ENCODE measurements at regions of chr4 and their contacts with region 1.

Region 1: GRCh38 chr4:73676861-73677323 is 56.7 kb upstream of the RASSF6 start:
- DNase-seq: peak; percentile 49
- H3K4me3 Mint-ChIP-seq: no peak overlapping the region
- H3K27ac Mint-ChIP-seq: peak overlapping the region; percentile 79
- H3K4me1 Mint-ChIP-seq: peaks cover 46% of the 10 kb centered on the region
- H3K27me3 Mint-ChIP-seq: no peaks in the 10 kb centered on the region
- CTCF ChIP-seq: no peak

Region 2: DNA sequence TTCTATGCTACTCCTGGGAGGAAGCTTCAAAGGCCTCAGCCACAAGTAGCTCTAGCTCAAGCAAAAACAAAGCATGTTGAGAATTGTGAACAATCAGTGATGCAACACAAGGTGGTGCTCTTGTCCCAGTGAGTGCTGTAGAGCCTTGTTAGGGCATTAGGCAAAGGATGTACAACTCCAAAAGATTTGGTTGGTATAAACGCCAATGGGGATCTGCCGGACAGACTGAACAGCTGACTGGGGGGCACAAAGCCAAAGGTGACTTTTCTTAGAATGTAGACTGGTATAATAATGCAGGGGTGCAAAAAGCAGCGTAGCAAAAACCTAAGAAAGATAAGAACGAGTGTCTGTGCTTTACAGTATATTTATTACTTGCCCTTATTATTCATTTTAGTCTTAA is 335.4 kb before region 1 on chr4:
- CTCF ChIA-PET with region 1: no interaction called
- intact Hi-C with region 1: no loop called
- DNase-seq: peak; percentile 35
- H3K4me3 Mint-ChIP-seq: no peak overlapping the region
- H3K27ac Mint-ChIP-seq: no peak overlapping the region
- H3K4me1 Mint-ChIP-seq: peaks cover 14% of the 10 kb centered on the region
- H3K27me3 Mint-ChIP-seq: no peaks in the 10 kb centered on the region
- CTCF ChIP-seq: no peak

Region 3: DNA sequence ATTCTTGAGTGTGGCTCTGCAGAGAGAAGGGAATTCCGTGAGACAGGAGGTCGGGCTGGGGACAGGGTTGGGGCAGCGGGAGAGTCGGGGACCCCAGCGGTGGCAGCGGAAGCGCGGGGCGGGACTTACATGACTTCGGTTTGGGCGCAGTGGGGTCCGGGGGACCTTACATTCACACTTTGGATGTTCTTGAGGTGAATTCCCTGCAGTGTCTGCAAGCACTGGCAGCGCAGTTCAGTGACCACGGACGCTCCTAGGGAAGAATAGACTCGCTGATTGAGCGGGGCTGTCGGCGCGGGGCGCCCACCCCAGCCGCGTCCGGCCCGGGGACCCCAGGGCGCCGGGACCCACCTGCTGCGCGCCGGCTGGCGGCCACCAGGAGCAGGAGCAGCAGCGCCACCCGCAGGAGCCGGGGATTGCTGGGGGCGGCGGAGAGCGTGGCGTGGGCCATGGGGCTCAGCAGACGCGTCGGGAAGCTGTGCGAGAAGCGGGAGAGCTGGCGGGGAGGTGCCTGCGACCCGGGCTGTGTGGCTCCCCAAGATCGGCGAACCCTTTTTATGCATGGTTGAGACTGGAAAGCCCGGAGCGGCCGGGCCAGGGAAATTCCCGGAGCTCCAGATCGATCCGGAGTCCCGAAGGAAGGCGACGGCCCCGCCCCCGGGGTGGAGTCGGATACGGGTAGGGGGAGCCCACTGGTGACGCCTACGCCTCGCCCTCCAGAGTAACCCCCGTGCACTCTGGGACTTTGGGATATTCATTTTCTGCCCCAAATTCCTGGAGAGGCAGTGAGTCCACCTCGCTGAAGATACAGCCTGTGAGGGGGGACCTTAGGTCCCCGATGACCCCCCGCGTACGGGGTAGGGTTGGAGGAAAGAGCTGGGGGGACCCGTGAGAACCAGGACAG is 361.5 kb after region 1 on chr4 and contains the start of gene CXCL3:
- CTCF ChIA-PET with region 1: no interaction called
- intact Hi-C with region 1: loop called (anchors 10 kb)
- DNase-seq: peak; percentile 94
- H3K4me3 Mint-ChIP-seq: peak within 1 kb of the TSS; percentile 84
- H3K27ac Mint-ChIP-seq: peak within 1 kb of the TSS; percentile 91
- H3K4me1 Mint-ChIP-seq: peaks cover 42% of the 10 kb centered on the region
- H3K27me3 Mint-ChIP-seq: no peaks in the 10 kb centered on the region
- CTCF ChIP-seq: no peak
- total RNA-seq, gene CXCL3: 80.8 and 153 TPM in 2 replicates